Common myeloid progenitor, CD34-positive (primary cell): ENCODE measurements at regions of chr6 and their contacts with region 1.

Region 1: DNA sequence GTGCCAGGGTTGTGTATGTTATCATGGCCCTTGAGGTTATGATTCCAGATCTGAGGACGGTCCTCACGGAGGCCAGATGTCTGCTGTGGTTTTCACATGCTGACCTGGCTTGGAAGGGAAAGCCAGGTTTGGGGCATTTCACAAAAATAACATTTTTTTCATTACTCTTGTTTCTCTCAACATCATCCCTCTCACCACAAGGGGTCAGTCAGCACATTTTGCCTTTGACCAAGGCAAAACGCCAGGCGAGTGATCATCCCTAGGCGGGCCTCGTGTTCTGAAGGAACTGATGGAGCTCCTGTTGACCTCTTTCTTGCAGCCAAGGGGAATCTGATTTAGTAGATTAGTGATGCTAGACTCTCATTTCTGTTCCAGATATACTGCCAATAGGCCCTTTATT is 133.5 kb downstream of the TBC1D7 start:
- DNase-seq: peak; percentile 60 to 64 (median 63)
- H3K4me3 ChIP-seq: no peak overlapping the region
- H3K27ac ChIP-seq: no peak overlapping the region
- H3K4me1 ChIP-seq: peaks cover 0 to 14% (median 5%) of the 10 kb centered on the region in 4 experiments
- H3K27me3 ChIP-seq: no peaks in the 10 kb centered on the region

Region 2: DNA sequence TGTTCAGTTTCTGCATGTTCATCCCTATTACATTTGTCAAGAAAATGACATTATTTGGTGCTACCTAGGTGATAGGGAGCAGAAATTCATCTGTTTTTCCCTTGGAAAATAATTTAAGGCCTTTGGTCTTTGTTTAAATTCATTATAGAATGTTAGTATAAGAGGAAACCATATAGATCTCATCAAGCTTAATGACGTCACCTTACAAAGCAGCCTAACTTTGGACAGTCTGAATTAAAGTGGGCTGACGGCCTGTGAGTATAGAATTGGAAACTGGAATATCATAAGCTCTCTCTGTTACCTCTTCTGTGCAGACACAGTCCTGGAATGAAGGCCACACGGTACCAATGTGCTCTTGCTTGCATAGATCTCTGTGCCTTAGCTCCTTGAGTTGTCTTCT is 25.4 kb after region 1 on chr6:
- CTCF ChIA-PET with region 1: no interaction called
- POLR2A ChIA-PET with region 1: no interaction called
- DNase-seq: no peak
- H3K4me3 ChIP-seq: no peak overlapping the region
- H3K27ac ChIP-seq: no peak overlapping the region
- H3K4me1 ChIP-seq: peaks cover 15 to 27% (median 17%) of the 10 kb centered on the region in 4 experiments
- H3K27me3 ChIP-seq: no peaks in the 10 kb centered on the region

Region 3: DNA sequence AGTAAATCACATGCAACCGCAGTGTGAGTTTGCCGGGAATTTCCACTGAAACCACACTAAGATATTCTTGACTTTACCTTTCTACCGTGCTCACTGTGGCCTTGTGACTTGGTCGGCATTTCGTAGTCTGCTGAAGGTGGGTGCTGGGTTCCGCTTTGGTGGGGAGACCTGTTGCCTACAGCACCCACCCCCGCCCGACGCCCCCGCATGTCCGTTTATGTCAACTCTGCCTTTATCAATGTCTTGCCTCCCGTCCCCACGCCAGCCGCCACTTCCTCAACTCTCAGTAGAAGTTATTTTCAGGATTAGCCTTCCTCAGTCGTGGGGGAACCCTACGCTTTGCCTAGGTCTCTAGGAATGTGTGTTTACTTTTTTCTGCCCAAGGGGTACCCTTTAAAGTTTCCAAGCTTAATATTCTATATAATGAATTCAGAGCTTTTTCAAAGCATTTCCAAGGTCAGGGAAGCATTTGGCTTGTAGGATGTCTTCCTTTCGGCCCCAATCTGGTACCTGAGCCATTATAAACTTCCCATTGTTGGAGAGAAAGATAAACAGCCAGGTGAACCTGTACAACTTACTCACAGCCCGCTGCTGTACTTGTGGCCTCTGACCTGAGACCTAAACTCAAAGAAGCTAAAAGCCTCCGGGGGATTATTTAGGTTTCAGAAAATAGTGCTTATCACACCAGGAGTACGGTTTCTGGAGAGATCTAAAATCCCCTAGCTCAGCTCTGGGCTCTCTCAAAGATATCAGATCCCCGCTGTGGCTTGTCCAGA is 79.3 kb after region 1 on chr6:
- CTCF ChIA-PET with region 1: interaction called, 16 read pairs
- POLR2A ChIA-PET with region 1: interaction called, 6 read pairs
- DNase-seq: peak; percentile 85 to 96 (median 94)
- H3K4me3 ChIP-seq: peak overlapping the region in 6 of 7 experiments; percentile 71 to 94 (median 80)
- H3K27ac ChIP-seq: peak overlapping the region; percentile 92 to 95
- H3K4me1 ChIP-seq: peaks cover 16 to 75% (median 57%) of the 10 kb centered on the region in 4 experiments
- H3K27me3 ChIP-seq: no peaks in the 10 kb centered on the region